Sciatic nerve (tissue), 2 donors: ENCODE measurements at regions of chr17 and their contacts with region 1.

Region 1: DNA sequence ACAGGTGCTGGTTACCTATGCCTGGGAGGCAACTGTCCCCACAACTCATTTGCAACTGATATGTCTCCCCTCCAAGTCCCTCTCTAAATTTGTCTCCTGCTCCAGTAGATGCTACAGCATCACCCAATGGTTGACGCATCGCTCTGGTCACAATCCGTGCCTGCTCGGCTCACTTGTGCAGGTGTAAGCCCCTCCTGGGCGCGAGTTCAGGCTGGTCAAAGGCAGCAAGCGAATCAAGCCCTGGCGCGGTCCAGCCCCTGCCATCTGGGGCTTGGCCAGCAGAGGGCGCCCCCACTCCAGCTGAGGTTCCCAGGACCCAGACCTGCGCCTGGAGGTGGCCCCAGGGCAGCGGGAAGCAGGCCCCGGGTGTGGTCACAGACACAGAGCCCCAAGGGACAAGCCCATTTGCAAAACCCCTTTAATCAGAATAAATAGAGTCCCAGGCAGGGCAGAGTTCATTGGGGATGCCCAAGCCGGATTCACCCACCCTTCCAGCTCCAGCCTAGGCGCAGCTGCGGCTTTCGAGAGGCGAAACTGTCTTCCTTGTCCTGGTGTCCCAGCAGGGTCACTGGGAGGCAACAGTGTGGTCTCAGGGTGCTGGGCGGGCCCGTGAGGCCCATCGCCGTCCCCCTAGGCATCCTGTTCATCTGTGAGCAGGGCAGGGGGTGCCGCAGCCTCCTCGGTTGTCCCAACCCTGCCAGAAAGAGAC is 15.9 kb downstream of the TMC6 start:
- DNase-seq: peak; percentile 88
- ATAC-seq: peak; percentile 77

Region 2: GRCh38 chr17:78176548-78177025 is 63.9 kb after region 1 on chr17:
- intact Hi-C with region 1: loop called (anchors 5 kb)
- DNase-seq: peak; percentile 83
- ATAC-seq: peak; percentile 34

Region 3: DNA sequence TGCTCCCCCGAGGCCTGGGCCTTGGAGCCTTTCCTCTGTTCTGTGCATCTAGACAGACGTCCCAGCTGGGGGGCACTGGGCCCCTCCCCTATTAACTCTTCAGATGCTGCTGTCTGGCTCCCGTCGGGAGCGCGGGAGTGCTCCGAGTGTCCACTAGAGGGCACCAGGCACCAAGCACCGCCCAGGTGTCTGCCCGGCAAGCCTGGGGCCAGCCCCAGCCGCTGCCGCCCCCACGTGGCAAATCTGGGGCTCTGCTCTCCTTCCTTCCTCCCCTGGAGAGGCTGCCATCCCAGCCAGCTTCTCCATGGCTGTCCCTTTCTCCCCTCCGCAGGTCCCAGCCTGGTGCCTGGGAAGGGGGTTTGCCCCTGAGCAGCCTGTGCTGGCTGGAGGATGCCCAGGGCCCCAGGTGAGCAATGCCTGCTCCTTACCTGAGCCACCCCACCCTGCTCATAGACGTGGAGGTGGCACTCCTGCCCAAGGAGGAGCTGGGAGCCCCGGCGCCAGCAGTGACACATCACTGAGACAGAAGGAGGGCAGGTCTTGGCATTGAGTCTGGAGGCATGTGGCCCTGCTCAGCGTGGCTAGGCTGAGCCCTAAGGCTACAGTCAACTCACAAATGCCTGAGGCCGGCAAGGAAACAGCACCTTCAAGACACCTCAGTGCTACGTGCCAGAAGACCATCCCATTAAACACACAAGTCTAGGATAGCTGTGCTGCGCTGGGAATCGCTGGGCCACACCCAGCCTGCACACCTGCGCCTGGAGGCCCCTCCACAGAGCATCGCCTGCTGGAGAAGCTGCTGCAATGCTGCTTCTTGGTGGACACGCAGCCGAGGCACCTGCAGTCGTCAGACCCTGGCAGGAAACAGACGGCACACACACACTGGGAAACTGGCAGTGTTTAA is 138.5 kb after region 1 on chr17:
- intact Hi-C with region 1: loop called (anchors 5 kb)
- DNase-seq: peak; percentile 89
- ATAC-seq: peak; percentile 79

Region 4: DNA sequence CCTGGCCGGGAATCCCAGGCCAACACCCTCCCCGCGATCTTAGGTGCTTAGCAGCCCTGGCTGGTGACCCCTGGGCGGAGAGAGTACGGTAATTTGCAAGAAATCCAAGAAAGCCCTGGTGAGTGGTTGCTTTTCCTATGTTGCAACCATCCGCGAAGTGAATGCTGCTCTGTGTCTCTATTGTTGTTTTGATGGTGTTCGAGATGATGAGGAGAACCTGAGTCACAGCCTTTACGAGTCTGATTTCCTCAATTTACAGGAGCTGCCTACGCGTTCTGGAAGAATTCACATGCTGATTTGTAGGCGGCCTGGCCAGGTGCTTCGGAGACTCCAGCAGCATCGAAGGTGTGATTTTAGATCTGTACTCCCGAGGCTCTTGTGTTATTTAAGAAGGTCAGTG is 182.1 kb after region 1 on chr17:
- intact Hi-C with region 1: no loop called
- DNase-seq: no peak
- ATAC-seq: no peak